ENCODE measurements at regions of chr17 and their contacts with region 1.

Region 1: DNA sequence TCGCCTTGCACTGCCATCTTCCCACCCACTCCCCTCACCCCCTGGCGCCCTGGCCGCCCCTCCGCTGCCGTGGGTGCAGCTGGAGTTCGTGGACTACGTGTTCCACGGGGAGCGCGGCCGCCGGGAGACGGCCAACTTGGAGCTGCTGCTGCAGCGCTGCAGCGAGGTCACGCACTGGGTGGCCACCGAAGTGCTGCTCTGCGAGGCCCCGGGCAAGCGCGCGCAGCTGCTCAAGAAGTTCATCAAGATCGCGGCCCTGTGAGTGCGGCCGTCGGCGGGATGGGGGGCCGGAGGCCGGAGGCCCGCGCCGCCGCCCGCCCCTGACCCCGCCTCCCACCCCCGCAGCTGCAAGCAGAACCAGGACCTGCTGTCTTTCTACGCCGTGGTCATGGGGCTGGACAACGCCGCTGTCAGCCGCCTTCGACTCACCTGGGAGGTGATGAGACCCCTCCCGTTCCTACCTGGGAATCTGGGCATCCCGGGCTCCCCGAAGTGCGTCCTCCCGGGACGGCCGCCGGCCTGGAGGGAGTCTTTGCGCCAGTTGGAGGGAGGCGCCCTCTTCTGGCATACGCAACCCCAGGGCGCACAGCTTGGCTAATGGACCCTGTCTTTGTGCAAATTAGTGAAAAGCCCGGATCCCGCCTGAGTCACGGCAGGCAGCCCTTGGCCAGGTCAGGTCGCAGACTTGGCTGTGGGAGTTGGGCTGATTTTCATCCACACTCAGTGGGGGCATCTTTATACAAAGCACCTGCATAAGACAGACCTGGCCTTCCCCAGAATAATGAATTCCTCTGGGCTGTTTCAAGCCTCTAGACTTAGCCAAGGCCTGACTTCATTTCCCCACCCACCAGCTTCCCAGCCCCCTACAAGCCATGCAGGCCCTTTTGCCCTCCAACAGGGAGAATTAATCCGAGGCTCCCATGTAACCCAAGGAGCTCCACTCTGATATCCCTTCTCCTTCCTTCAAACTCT is 14.3 kb downstream of the RAPGEFL1 start:
- DNase-seq: peak; percentile 86 to 96
- ATAC-seq: peak; percentile 83 to 91
- H3K4me3 ChIP-seq: peak overlapping the region; percentile 47
- H3K27ac ChIP-seq: peak overlapping the region; percentile 50 to 70
- H3K4me1 ChIP-seq: peaks cover 17% of the 10 kb centered on the region
- CTCF ChIP-seq: peak; percentile 95
- EP300 ChIP-seq: no peak
- POLR2A ChIP-seq: no peak; the same call in 1 of the 2 replicates
- RAD21 ChIP-seq: peak; percentile 74 to 77

Region 2: DNA sequence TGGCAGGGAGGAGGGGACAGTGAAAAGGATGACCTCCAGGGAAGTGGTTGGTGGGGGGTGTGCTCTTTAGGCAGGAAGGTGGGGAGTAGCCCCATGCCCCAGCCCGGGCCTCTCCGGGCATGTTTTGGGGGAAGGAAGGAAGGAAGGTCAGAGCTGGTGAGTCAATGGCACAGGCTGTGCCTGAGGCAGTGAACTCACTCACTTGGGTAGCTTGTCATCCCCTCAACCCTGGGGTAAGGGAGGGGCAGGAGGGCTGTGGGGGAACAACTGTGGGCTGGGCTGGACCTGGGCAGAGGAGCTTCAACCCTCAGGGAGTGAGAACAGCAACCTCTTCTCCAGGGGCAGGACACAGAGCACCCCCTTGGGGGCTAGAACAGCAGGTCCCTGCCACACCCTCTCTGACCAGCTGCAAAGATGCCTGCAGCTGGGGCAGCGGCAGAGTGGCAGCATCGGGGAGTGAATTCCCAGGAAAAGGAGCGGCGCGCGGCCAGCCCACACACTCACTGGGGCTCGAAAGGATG is 170.0 kb before region 1 on chr17:
- CTCF ChIA-PET with region 1: interaction called, 97 read pairs
- POLR2A ChIA-PET with region 1: no interaction called
- DNase-seq: peak; percentile 56 to 80
- ATAC-seq: peak; percentile 57 to 72
- H3K4me3 ChIP-seq: no peak overlapping the region
- H3K27ac ChIP-seq: peak overlapping the region; percentile 83 to 84
- H3K4me1 ChIP-seq: peaks cover 43% of the 10 kb centered on the region
- CTCF ChIP-seq: no peak
- EP300 ChIP-seq: no peak
- POLR2A ChIP-seq: no peak
- RAD21 ChIP-seq: no peak

Region 3: DNA sequence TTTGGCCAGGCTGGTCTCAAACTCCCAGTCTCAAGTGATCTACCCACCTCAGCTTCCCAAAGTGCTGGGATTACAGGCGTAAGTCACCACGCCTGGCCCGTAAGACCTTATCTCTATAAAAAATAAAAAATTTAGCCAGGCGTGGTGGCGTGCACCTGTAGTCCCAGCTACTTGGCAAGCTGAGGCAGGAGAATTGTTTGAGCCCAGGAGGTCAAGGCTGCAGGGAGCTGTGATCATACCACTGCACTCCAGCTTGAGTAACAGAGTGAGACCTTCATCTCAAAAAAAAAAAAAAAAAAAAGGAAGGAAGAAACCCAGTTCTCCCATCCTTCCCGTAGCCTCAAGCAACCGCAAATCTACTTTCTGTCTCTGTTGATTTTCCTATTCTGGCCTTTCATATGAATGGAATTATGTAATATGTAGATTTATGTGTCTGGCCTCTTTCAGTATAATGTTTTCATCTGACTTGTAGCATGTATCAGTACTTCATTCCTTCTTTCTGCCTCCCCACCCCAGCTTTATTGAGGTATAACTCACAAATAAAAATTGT is 40.0 kb before region 1 on chr17:
- CTCF ChIA-PET with region 1: interaction called, 11 read pairs
- POLR2A ChIA-PET with region 1: no interaction called
- DNase-seq: no peak
- ATAC-seq: 0 out of 6 replicates have a peak, but pooled peaks of 1 of the 2 experiments have one; percentile 24
- H3K4me3 ChIP-seq: no peak overlapping the region
- H3K27ac ChIP-seq: no peak overlapping the region
- H3K4me1 ChIP-seq: peaks cover 5% of the 10 kb centered on the region; the same call in 1 of the 3 replicates
- CTCF ChIP-seq: no peak
- EP300 ChIP-seq: no peak
- POLR2A ChIP-seq: no peak
- RAD21 ChIP-seq: no peak

Region 4: DNA sequence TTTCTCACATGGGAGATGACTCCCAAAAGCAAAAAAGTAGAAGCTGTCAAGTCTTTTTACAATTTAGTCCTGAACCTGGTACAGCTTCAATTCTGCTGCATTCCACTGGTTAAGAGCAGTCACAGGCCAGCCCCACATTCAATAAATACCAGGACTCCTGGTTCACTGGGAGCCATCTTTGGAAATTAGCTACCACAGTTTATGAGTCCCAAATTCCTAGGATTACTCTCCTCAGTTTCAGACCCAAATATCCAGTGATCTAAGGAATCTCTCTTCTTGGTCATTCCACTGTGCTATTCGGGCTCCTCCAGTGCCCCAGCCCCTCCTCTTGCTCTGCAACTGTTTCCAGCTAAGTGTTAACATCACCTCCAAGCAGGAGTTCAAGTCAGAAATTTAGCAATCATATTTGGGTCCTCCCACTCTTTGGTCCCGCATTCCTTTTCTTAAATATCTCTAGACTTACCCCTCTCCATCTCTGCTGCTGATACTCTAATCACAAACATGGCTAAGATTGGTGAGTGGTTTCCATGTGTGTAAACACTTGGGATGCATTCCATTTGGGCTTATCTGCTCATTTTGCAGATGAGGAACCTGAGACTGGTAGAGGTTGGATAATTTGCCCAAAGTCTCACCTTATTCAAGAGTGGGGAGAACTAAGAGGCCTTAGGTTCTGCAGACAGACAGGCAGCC is 18.0 kb after region 1 on chr17:
- CTCF ChIA-PET with region 1: interaction called, 157 read pairs
- POLR2A ChIA-PET with region 1: no interaction called
- DNase-seq: no peak
- ATAC-seq: peak; percentile 36 to 54; a peak in 5 of 6 replicates
- H3K4me3 ChIP-seq: no peak overlapping the region
- H3K27ac ChIP-seq: no peak overlapping the region
- H3K4me1 ChIP-seq: no peaks in the 10 kb centered on the region
- CTCF ChIP-seq: no peak
- EP300 ChIP-seq: no peak
- POLR2A ChIP-seq: no peak
- RAD21 ChIP-seq: no peak

Region 5: GRCh38 chr17:40242774-40243173 is 51.3 kb after region 1 on chr17:
- CTCF ChIA-PET with region 1: interaction called, 10 read pairs
- POLR2A ChIA-PET with region 1: no interaction called
- DNase-seq: no peak
- ATAC-seq: no peak
- H3K4me3 ChIP-seq: no peak overlapping the region
- H3K27ac ChIP-seq: no peak overlapping the region
- H3K4me1 ChIP-seq: no peaks in the 10 kb centered on the region
- CTCF ChIP-seq: no peak
- EP300 ChIP-seq: no peak
- POLR2A ChIP-seq: no peak
- RAD21 ChIP-seq: no peak